Ovary (tissue), 10 donors: ENCODE measurements at regions of chr21 and their contacts with region 1.

Region 1: DNA sequence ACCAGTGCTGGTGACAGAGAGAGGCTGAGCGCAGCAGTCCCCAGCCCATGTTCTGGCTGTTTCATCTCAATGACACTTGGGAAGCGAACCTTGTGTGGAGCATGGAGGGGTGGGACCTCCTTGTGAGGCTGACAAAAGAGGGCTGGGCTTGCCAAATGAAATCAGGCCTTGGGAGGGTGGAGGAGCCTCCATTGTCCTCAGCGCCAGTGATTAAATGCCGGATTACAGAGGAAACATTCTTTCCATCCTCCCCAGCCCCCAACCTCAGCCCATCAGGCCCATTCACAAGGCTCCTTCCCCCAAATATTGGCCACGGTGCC is 63.3 kb upstream of the PAXBP1 start:
- DNase-seq: no peak
- H3K4me3 ChIP-seq: no peak overlapping the region
- H3K27ac ChIP-seq: no peak overlapping the region
- H3K4me1 ChIP-seq: no peaks in the 10 kb centered on the region
- H3K27me3 ChIP-seq: no peaks in the 10 kb centered on the region
- CTCF ChIP-seq: no peak
- EP300 ChIP-seq: no peak
- POLR2A ChIP-seq: no peak

Region 2: DNA sequence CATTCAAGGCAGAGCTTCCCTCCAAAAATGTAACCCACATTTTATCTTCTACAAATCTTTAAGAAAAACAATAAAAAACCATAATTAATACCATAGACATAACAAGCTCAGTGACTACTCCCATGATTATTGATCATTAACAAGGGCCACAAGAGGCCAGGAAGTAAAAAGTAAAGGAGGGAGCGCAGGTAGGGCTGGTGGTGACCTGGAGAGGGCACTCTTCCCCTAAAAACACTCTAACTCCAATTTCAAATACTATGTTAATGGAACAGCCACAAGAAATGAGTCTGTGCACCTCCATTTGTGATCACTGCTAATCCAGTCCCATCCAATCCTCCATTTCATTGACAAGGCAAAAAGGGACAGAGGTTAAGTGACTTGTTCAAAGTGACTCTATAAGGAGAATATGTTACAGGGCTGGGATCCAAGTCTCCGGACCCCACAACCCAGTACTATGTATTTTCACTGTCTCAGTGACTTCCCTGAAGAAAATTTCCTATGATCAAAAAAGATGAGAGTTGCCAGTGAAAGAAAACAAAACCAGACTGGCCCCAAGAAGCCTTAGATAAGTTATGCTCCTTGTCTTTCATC is 181.5 kb before region 1 on chr21:
- intact Hi-C with region 1: loop called in 1 of 4 experiments (anchors 10 kb)
- DNase-seq: no peak
- H3K4me3 ChIP-seq: no peak overlapping the region
- H3K27ac ChIP-seq: no peak overlapping the region
- H3K4me1 ChIP-seq: no peaks in the 10 kb centered on the region
- H3K27me3 ChIP-seq: no peaks in the 10 kb centered on the region
- CTCF ChIP-seq: peak in 1 of 3 donors; percentile 9
- EP300 ChIP-seq: no peak
- POLR2A ChIP-seq: no peak

Region 3: GRCh38 chr21:32794644-32795079 is 40.2 kb before region 1 on chr21:
- intact Hi-C with region 1: no loop called
- DNase-seq: no peak
- H3K4me3 ChIP-seq: no peak overlapping the region
- H3K27ac ChIP-seq: no peak overlapping the region
- H3K4me1 ChIP-seq: peaks cover 9% of the 10 kb centered on the region
- H3K27me3 ChIP-seq: no peaks in the 10 kb centered on the region
- CTCF ChIP-seq: no peak
- EP300 ChIP-seq: no peak
- POLR2A ChIP-seq: no peak